BJ (cell line): ENCODE measurements at regions of chr12 and their contacts with region 1.

Region 1: DNA sequence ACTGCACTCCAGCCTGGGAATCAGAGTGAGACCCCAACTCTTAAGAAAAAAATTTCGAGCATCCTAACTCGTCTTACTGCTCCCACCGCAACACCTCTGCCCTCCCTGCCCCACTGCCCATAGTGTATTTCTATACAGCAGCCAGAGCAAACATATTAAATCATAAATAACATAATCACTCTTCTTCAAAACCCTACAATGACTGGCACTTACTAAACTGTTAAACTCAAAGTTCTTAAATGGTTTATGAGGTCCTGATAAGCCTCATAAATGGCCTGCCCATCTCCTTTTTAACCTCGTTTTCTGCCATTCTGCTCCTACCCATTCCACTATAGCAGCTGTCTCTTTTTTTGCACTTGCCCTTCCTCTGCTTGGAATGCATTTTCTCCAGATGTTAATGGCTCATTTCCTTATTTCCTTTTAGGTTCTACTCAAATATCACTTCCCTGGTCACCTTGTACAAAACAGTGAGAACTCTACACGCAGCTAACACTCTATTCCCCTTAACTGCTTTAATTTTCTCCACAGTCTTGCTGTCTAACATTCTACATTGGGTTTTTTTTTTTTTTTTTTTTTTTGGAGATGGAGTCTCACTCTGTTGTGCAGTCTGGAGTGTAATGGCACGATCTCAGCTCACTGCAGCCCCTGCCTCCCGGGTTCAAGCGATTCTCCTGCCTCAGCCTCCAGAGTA is 45.2 kb downstream of the CDK17 start:
- DNase-seq: no peak
- H3K4me3 ChIP-seq: no peak overlapping the region
- H3K27me3 ChIP-seq: no peaks in the 10 kb centered on the region
- CTCF ChIP-seq: no peak

Region 2: DNA sequence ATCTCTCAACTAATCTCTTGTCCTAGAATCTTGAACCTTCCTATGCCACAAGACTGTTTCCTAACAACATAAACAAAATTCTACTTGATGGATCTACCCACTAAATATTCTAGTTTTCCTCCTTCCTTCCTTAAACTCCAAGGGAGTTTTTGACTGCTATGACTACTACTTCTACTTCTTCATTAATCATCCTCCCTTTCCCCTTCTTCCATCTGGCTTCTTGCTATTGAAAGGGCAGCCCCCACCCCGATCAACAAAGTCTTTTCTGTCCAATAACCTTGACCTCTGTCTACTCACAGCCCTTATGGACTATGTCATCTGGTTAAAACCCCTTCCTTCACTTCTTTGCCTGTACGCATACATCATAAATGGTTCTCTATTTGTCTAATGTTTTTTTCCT is 325.2 kb before region 1 on chr12:
- CTCF ChIA-PET with region 1: no interaction called
- POLR2A ChIA-PET with region 1: no interaction called
- DNase-seq: no peak
- H3K4me3 ChIP-seq: no peak overlapping the region
- H3K27me3 ChIP-seq: no peaks in the 10 kb centered on the region
- CTCF ChIP-seq: no peak

Region 3: DNA sequence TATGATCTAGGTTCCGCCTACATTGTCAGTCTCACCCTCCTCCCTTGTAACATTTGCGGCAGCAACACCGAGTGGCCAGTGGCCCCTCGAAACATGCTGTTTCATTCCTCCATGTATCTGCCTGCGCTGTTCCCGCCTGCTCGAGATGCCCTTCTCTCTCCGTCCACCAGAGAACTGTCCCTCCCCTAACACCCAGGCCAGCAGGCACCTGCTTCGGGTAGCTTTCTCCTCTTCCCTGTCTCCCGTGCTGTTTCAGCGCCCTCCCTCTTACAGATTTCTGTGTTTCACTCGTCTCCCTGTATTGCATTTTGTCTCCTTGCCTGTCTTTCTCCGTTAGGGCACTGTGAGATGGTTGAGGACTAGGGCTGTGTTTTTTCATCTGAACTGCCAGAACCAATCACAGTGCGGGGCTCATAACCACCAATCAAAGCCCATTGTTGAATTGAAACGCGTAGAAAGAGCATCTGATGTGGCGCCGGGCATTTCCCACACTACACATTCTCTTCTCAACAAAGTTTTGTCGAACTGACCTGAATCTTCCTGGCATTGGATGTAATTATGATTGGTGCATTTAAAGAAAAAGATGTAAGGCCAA is 201.8 kb before region 1 on chr12:
- CTCF ChIA-PET with region 1: no interaction called
- POLR2A ChIA-PET with region 1: no interaction called
- DNase-seq: no peak
- H3K4me3 ChIP-seq: no peak overlapping the region
- H3K27me3 ChIP-seq: no peaks in the 10 kb centered on the region
- CTCF ChIP-seq: no peak

Region 4: GRCh38 chr12:96343347-96343954 is 11.5 kb before region 1 on chr12:
- CTCF ChIA-PET with region 1: no interaction called
- POLR2A ChIA-PET with region 1: no interaction called
- DNase-seq: no peak
- H3K4me3 ChIP-seq: no peak overlapping the region
- H3K27me3 ChIP-seq: no peaks in the 10 kb centered on the region
- CTCF ChIP-seq: no peak

Region 5: DNA sequence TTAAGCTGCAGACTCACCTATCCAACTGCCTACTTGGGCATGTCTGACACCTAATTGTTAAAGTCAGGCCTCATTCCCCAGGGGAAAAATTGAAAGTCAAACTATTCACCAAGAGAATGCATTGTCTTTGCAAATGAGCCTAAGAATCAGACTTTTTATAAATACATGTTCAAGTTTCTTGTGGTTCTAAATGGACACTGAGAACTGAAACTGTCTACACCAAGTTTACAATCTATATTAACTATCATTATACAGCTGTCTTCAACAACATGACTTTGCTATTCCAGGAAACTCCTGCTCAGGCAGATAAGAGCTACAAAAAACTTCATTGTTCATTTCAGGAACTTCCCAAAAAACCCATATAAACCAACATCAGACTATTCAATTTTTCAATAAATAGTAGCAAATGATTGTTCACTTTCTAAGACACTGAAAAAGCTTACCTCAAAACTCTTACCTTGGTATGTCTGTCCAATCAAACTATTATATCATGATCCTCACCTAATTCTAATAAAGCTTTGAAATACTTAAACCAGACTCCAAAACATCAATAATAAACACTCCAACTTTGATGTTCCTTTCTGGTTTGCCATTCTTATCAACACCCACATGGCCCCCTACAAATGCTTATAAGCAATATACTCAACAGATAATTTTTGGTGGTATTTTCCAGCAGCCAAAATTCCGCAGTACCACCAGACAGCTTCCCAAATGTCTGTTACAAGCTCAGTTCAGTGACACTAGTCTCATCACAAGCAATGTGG is 21.0 kb after region 1 on chr12:
- CTCF ChIA-PET with region 1: no interaction called
- POLR2A ChIA-PET with region 1: interaction called, 14 read pairs
- DNase-seq: no peak
- H3K4me3 ChIP-seq: no peak overlapping the region
- H3K27me3 ChIP-seq: no peaks in the 10 kb centered on the region
- CTCF ChIP-seq: no peak

Region 6: DNA sequence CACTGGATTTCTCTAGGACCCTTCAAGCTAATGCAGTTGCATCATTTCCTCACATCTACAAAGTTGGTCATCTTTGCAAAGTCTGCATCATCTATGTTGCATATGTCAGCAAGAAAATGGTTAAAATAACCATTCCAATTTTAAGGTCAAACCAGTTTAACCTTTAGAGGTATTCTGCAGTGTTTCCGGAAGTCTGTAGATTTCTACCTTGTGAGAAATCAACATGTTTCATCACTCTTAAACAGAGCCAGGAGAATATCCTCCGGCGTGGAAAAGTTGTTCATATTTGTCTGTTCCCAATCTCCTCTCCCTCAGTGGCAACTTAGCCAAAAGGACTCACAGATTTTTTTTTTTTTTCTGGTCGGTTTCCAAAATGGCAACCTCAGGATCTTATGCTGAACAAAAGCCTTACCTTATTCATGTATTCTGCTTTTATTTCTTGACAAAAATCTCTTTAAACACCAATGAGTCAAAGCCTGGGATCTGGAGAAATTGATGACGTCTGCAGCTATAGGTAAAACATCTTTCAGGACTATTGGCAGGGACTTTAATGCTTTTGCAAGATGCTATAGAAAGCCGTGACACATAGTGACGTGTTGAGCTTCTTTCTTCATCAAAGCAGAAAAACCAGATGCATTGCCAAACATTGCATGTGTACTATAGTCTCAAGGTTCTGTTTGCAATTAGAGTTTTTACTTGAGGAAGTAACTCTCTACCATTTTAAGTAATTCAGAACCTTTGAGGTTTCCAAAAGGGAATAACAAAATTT is 61.2 kb after region 1 on chr12:
- CTCF ChIA-PET with region 1: no interaction called
- POLR2A ChIA-PET with region 1: no interaction called
- DNase-seq: no peak
- H3K4me3 ChIP-seq: no peak overlapping the region
- H3K27me3 ChIP-seq: no peaks in the 10 kb centered on the region
- CTCF ChIP-seq: no peak